K562 (cell line): ENCODE measurements at regions of chr11 and their contacts with region 1.

Region 1: GRCh38 chr11:19800162-19800561 is 87.5 kb downstream of the NAV2 start:
- DNase-seq: no peak
- ATAC-seq: 0 out of 3 replicates have a peak, but pooled peaks have one; percentile 25
- H3K4me3 ChIP-seq: no peak overlapping the region
- H3K27ac ChIP-seq: no peak overlapping the region
- H3K4me1 ChIP-seq: no peaks in the 10 kb centered on the region
- H3K27me3 ChIP-seq: peaks cover 0 to 10% of the 10 kb centered on the region in 2 experiments; a peak in 2 of 5 replicates
- CTCF ChIP-seq: peak; percentile 18 to 31 (median 20); a peak in 4 of 6 replicates
- EP300 ChIP-seq: no peak
- POLR2A ChIP-seq: no peak
- RAD21 ChIP-seq: 0 out of 4 replicates have a peak, but pooled peaks of 1 of the 2 experiments have one; percentile 25

Region 2: DNA sequence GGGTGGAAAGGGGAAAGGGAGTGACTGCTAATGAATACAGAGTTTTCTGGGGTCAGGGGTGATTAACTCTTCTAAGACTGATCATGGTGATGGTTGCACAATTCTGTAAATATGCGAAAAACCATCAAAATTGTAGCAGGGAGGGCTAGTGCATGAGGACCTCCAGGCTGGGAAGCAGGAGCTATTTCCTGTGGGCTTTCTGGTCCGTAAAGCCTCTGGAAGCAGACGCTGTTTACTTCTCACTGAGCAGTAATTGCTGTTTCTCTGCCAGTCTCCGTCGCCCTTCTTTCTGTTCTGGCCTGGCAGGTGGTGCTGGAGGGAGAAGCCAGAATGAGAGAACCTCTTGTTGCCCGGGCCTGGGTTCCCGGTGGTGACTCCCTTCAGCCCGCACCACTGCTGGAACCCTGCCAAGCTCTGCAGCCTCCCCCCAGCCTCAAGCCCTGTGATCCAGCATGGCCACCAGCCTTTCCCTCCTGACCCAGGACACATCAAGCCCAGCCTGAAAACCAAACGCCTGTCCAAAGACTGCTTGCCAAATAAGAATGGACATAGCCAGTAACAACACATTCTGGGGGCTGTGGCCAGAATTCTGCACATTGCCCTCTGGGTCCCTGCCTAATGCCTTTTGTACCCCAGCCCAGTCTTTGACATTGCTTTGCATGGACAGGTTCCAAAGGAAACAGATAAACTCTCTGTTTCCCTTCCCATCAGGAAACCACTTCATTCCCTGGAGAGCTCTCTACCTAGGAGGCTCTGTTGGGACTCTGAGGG is 288.6 kb before region 1 on chr11:
- CTCF ChIA-PET with region 1: no interaction called
- POLR2A ChIA-PET with region 1: no interaction called
- in situ Hi-C with region 1: no loop called
- intact Hi-C with region 1: no loop called
- DNase-seq: no peak
- ATAC-seq: no peak
- H3K4me3 ChIP-seq: no peak overlapping the region
- H3K27ac ChIP-seq: no peak overlapping the region
- H3K4me1 ChIP-seq: no peaks in the 10 kb centered on the region
- H3K27me3 ChIP-seq: peaks cover 0 to 15% of the 10 kb centered on the region in 2 experiments; a peak in 2 of 5 replicates
- CTCF ChIP-seq: no peak
- EP300 ChIP-seq: no peak
- POLR2A ChIP-seq: no peak
- RAD21 ChIP-seq: no peak

Region 3: DNA sequence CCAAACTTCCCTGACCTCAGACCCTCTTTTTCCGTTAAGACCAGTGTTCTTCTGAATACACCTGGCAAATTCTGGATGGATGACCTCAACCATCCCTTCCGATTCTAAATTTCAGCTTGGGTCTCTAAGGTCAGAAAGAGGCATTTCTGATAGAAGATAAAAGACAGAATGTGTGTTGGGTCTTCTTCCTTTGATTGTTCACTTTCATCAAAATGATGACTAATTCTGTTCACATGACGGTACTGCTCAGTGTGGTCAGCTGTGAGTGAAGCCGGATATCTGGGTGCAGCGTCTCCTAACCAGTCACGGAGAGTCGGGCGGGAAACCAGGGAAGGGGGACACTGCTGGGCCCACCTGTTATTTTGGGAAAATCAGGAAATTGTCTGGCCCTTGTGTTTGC is 239.2 kb before region 1 on chr11:
- CTCF ChIA-PET with region 1: no interaction called
- POLR2A ChIA-PET with region 1: no interaction called
- in situ Hi-C with region 1: no loop called
- intact Hi-C with region 1: loop called (anchors 1 kb)
- DNase-seq: no peak
- ATAC-seq: no peak
- H3K4me3 ChIP-seq: no peak overlapping the region
- H3K27ac ChIP-seq: no peak overlapping the region
- H3K4me1 ChIP-seq: peaks cover 0 to 5% of the 10 kb centered on the region in 2 experiments; a peak in 1 of 5 replicates
- H3K27me3 ChIP-seq: peaks cover 0 to 17% of the 10 kb centered on the region in 2 experiments; a peak in 2 of 5 replicates
- CTCF ChIP-seq: no peak
- EP300 ChIP-seq: no peak
- POLR2A ChIP-seq: no peak
- RAD21 ChIP-seq: no peak